Calu3 (cell line): ENCODE measurements at regions of chr12 and their contacts with region 1.

Region 1: GRCh38 chr12:96047229-96048211 is 12.1 kb upstream of the LTA4H start:
- DNase-seq: peak; percentile 62
- H3K4me3 Mint-ChIP-seq: peak overlapping the region; percentile 60
- H3K27ac Mint-ChIP-seq: peak overlapping the region; percentile 94
- H3K4me1 Mint-ChIP-seq: peaks cover 65% of the 10 kb centered on the region
- H3K27me3 Mint-ChIP-seq: no peaks in the 10 kb centered on the region
- CTCF ChIP-seq: no peak

Region 2: GRCh38 chr12:95653761-95654546 is 393.6 kb before region 1 on chr12:
- CTCF ChIA-PET with region 1: no interaction called
- intact Hi-C with region 1: no loop called
- DNase-seq: peak; percentile 51
- H3K4me3 Mint-ChIP-seq: peak overlapping the region; percentile 10
- H3K27ac Mint-ChIP-seq: peak overlapping the region; percentile 91
- H3K4me1 Mint-ChIP-seq: peaks cover 42% of the 10 kb centered on the region
- H3K27me3 Mint-ChIP-seq: no peaks in the 10 kb centered on the region
- CTCF ChIP-seq: no peak

Region 3: GRCh38 chr12:96035278-96036236 is 12.0 kb before region 1 on chr12 and contains the start of gene LTA4H:
- CTCF ChIA-PET with region 1: interaction called, 9 read pairs
- intact Hi-C with region 1: loop called (anchors 2 kb)
- DNase-seq: peak; percentile 98
- H3K4me3 Mint-ChIP-seq: no peak within 1 kb of the TSS
- H3K27ac Mint-ChIP-seq: no peak within 1 kb of the TSS
- H3K4me1 Mint-ChIP-seq: peaks cover 4% of the 10 kb centered on the region
- H3K27me3 Mint-ChIP-seq: no peaks in the 10 kb centered on the region
- CTCF ChIP-seq: no peak
- total RNA-seq, gene LTA4H: 105 and 120 TPM in 2 replicates

Region 4: GRCh38 chr12:96112733-96113132 is 65.2 kb after region 1 on chr12:
- CTCF ChIA-PET with region 1: no interaction called
- intact Hi-C with region 1: loop called (anchors 5 kb)
- DNase-seq: peak; percentile 36
- H3K4me3 Mint-ChIP-seq: no peak overlapping the region
- H3K27ac Mint-ChIP-seq: no peak overlapping the region
- H3K4me1 Mint-ChIP-seq: peaks cover 33% of the 10 kb centered on the region
- H3K27me3 Mint-ChIP-seq: no peaks in the 10 kb centered on the region
- CTCF ChIP-seq: no peak